HAP-1 (cell line): ENCODE measurements at regions of chr5 and their contacts with region 1.

Region 1: GRCh38 chr5:67209142-67209771 is 12.7 kb upstream of the CD180 start:
- DNase-seq: peak; percentile 80 to 85
- H3K4me3 ChIP-seq: no peak overlapping the region
- H3K4me1 ChIP-seq: no peaks in the 10 kb centered on the region
- H3K27me3 ChIP-seq: no peaks in the 10 kb centered on the region

Region 2: GRCh38 chr5:66814146-66814991 is 394.9 kb before region 1 on chr5:
- in situ Hi-C with region 1: loop called (anchors 25 kb)
- DNase-seq: peak; percentile 47 to 65
- H3K4me3 ChIP-seq: no peak overlapping the region
- H3K4me1 ChIP-seq: peaks cover 5% of the 10 kb centered on the region; the same call in 1 of the 2 replicates
- H3K27me3 ChIP-seq: peaks cover 80% of the 10 kb centered on the region

Region 3: DNA sequence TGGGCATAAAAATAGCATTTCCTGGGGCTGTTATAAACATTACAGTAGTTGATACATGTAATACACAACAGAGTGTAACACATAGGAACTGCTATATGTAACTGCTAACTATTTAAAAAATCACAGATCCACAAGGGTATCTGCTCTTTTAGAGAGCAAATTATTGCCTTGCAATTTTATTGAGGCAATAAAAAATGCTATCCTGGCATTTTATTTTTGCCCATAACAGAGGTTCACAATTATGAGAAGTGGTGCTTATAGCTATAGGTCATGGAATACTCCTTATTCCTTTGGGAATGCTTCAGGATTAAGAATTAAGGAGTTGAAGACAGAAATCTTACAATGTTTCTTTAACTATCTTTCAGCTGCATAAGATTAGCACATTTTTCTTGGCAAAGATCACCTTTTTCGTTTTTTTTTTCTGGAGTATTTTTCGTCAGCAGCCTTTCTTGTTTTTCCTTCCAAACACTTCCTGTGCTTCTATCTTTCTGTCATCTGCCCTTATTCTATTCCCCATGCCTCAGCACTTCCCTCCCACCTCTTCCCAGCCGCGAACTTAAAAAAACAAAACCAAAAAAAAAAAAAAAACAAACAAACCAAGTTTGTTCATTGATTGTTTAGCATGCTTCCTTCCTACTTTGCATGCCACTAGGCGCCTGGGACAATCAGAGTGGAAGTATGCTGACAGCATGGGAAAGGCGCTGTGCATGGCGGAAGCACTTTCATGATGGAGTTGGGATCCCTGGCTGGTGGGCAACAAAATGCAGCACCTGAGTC is 348.9 kb before region 1 on chr5:
- in situ Hi-C with region 1: no loop called
- DNase-seq: no peak
- H3K4me3 ChIP-seq: no peak overlapping the region
- H3K4me1 ChIP-seq: 0 out of 2 replicates have a peak, but pooled peaks cover 2% of the 10 kb centered on the region
- H3K27me3 ChIP-seq: peaks cover 6% of the 10 kb centered on the region

Region 4: GRCh38 chr5:67161002-67161401 is 48.3 kb before region 1 on chr5:
- in situ Hi-C with region 1: loop called (anchors 5 kb)
- DNase-seq: no peak
- H3K4me3 ChIP-seq: no peak overlapping the region
- H3K4me1 ChIP-seq: peaks cover 2% of the 10 kb centered on the region
- H3K27me3 ChIP-seq: no peaks in the 10 kb centered on the region

Region 5: GRCh38 chr5:67267347-67268216 is 58.3 kb after region 1 on chr5:
- in situ Hi-C with region 1: no loop called
- DNase-seq: no peak
- H3K4me3 ChIP-seq: no peak overlapping the region
- H3K4me1 ChIP-seq: no peaks in the 10 kb centered on the region
- H3K27me3 ChIP-seq: no peaks in the 10 kb centered on the region

Region 6: GRCh38 chr5:68272289-68272688 is 1063.0 kb after region 1 on chr5:
- in situ Hi-C with region 1: no loop called
- DNase-seq: no peak
- H3K4me3 ChIP-seq: no peak overlapping the region
- H3K4me1 ChIP-seq: no peaks in the 10 kb centered on the region; the same call in 1 of the 2 replicates
- H3K27me3 ChIP-seq: no peaks in the 10 kb centered on the region